ENCODE measurements at regions of chr10 and their contacts with region 1.

Region 1: DNA sequence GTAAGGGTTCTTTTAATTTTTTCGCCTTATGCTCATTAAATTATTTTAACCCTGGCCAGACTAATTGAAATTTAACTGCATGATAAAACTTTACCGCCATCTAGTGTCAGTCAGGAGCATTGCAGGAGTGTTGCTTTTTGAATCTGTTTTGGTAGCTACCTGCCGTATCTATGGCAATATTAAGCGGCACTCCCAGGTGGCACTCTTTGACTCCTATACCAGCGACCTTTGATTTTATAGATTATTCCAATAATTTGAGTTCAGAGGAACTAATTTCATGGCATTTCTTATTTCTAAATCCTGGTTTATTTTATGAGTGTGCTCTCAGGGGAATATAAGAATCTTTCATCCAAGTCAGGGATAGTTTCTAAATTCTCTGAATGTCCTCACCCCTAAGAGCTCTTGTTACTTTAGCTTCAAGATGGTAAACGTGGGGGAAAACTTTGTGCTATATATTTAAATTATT is 198.9 kb downstream of the REEP3 start:
- DNase-seq: peak; percentile 25
- ATAC-seq: peak; percentile 81
- H3K4me3 ChIP-seq: no peak overlapping the region
- H3K27ac ChIP-seq: no peak overlapping the region
- H3K4me1 ChIP-seq: no peaks in the 10 kb centered on the region
- H3K27me3 ChIP-seq: no peaks in the 10 kb centered on the region; a peak in 2 of 4 replicates
- CTCF ChIP-seq: peak; percentile 81 to 95 (median 92); a peak in 5 of 6 replicates
- EP300 ChIP-seq: no peak
- POLR2A ChIP-seq: no peak
- RAD21 ChIP-seq: peak; percentile 94

Region 2: DNA sequence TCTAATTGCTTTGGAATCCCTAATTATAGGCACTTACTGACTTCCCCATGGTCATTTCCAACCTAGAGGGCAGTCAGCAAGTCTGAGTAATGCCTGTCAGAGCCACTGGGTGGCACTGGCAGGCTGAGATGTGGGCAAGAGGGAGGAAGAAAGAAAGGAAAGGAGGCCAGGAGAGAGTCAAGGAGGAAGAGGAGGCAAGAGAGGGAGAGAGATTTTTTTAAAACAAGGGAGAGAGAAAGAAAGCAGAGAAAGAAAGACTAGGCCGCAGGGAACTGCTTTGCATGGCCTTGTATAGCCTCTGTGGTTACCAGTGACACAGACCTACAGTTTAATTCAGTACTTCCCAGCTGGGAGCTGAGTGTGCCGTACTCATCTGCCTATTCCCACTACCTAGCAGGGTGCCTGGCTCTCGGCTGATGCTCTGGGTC is 1126.0 kb before region 1 on chr10:
- CTCF ChIA-PET with region 1: interaction called, 7 read pairs
- POLR2A ChIA-PET with region 1: no interaction called
- RAD21 ChIA-PET with region 1: interaction called, 3 read pairs
- SMC1A ChIA-PET with region 1: interaction called, 4 read pairs
- in situ Hi-C with region 1: loop called (anchors 25 kb)
- intact Hi-C with region 1: loop called (anchors 10 kb)
- DNase-seq: peak; percentile 30
- ATAC-seq: peak; percentile 94
- H3K4me3 ChIP-seq: no peak overlapping the region
- H3K27ac ChIP-seq: no peak overlapping the region
- H3K4me1 ChIP-seq: peaks cover 7% of the 10 kb centered on the region
- H3K27me3 ChIP-seq: no peaks in the 10 kb centered on the region
- CTCF ChIP-seq: peak; percentile 90 to 97 (median 95)
- EP300 ChIP-seq: no peak
- POLR2A ChIP-seq: no peak
- RAD21 ChIP-seq: peak; percentile 100

Region 3: GRCh38 chr10:63157845-63158624 is 562.1 kb before region 1 on chr10:
- CTCF ChIA-PET with region 1: interaction called, 521 read pairs
- POLR2A ChIA-PET with region 1: no interaction called
- RAD21 ChIA-PET with region 1: interaction called, 30 read pairs
- SMC1A ChIA-PET with region 1: interaction called, 103 read pairs
- in situ Hi-C with region 1: loop called (anchors 5 kb)
- intact Hi-C with region 1: no loop called
- DNase-seq: peak; percentile 49
- ATAC-seq: peak; percentile 89
- H3K4me3 ChIP-seq: no peak overlapping the region
- H3K27ac ChIP-seq: 0 out of 2 replicates have a peak overlapping the region, but pooled peaks have one; percentile 31
- H3K4me1 ChIP-seq: peaks cover 3% of the 10 kb centered on the region; the same call in 1 of the 2 replicates
- H3K27me3 ChIP-seq: no peaks in the 10 kb centered on the region
- CTCF ChIP-seq: peak; percentile 70 to 86 (median 74); a peak in 5 of 6 replicates
- EP300 ChIP-seq: no peak
- POLR2A ChIP-seq: no peak
- RAD21 ChIP-seq: peak; percentile 97

Region 4: DNA sequence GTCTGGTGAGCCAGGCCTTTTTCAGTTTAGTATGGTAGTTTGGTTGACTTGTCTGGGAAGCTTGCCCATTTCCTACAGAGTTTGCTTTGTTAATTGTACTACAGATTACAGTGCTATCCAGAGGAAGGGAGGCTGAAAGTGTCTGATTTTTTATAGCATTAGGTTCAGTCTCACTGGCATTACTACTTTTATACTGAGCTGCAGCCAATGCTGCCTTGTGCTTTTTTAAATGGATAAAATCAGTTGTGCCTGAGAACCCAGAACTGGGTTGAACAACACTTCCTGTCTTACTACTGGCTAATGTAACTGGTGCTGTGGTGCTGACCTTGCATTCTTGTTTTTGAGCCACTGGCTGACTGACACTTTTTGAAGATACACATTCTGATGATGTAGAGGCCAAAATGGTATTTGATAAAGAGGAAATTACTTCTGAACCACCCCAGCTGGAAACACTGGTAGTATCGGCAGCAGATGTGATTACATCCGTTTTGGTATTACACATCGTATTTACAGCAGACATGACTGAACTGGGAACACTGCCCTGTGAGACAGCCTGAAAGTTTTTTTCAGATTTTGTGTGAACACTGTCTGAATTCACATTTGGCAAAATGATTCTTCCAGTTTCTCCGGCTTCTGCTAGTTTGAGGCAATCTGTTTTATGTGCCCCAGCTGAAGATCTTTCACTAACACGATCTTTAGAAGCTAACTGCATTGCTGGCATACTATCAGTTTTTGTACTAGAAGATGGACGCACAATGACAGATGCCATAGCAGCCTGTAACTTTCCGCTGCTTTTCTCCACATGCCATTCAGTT is 512.9 kb before region 1 on chr10:
- CTCF ChIA-PET with region 1: interaction called, 13 read pairs
- POLR2A ChIA-PET with region 1: no interaction called
- RAD21 ChIA-PET with region 1: interaction called, 10 read pairs
- SMC1A ChIA-PET with region 1: interaction called, 9 read pairs
- in situ Hi-C with region 1: no loop called
- intact Hi-C with region 1: no loop called
- DNase-seq: peak; percentile 36
- ATAC-seq: peak; percentile 51
- H3K4me3 ChIP-seq: no peak overlapping the region; the same call in 1 of the 2 replicates
- H3K27ac ChIP-seq: peak overlapping the region; percentile 75
- H3K4me1 ChIP-seq: peaks cover 32% of the 10 kb centered on the region
- H3K27me3 ChIP-seq: no peaks in the 10 kb centered on the region
- CTCF ChIP-seq: no peak
- EP300 ChIP-seq: no peak
- POLR2A ChIP-seq: no peak; the same call in 1 of the 2 replicates
- RAD21 ChIP-seq: no peak

Region 5: GRCh38 chr10:63528084-63528747 is 191.9 kb before region 1 on chr10:
- CTCF ChIA-PET with region 1: interaction called, 7 read pairs
- POLR2A ChIA-PET with region 1: no interaction called
- RAD21 ChIA-PET with region 1: no interaction called
- SMC1A ChIA-PET with region 1: interaction called, 12 read pairs
- in situ Hi-C with region 1: no loop called
- intact Hi-C with region 1: loop called (anchors 10 kb)
- DNase-seq: no peak
- ATAC-seq: no peak
- H3K4me3 ChIP-seq: no peak overlapping the region
- H3K27ac ChIP-seq: no peak overlapping the region
- H3K4me1 ChIP-seq: no peaks in the 10 kb centered on the region; the same call in 1 of the 2 replicates
- H3K27me3 ChIP-seq: no peaks in the 10 kb centered on the region
- CTCF ChIP-seq: no peak
- EP300 ChIP-seq: no peak
- POLR2A ChIP-seq: no peak
- RAD21 ChIP-seq: no peak

Region 6: DNA sequence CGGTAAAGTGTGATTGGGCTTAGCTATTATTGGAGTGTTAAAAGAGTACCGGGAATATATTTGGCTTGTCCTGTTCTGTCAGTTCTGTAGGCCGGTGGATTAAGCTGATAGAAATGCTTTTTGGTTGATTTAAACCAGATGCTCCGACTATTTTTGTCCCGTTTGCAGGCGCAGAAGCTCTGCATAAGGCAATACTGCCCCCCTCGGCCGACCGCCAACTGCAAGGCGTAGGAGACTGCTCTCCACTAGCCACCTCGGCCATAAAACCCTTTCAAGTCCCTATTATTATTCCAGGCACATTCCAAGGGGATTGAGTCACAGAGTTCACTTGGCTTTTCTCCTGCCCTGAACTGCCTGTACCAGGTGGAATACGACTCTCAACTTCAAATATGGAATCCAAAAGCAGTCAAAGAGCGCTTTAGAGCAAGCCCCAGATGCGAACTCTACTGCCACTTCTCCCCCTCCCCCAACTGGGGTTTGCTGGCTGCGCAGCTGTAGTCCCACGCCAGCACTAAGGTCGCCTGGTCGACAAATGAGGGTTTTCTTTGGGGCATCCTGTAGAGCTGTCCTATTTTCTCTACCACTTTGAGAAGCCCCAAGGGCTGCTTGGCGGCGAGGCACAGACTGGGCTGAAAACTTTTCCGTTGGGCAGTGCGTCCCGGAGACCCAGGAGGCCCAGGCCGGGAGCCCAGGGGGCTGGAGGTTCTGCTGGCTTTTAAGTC is 90.6 kb before region 1 on chr10:
- CTCF ChIA-PET with region 1: interaction called, 149 read pairs
- POLR2A ChIA-PET with region 1: no interaction called
- RAD21 ChIA-PET with region 1: interaction called, 96 read pairs
- SMC1A ChIA-PET with region 1: interaction called, 50 read pairs
- in situ Hi-C with region 1: no loop called
- intact Hi-C with region 1: loop called (anchors 1 kb)
- DNase-seq: peak; percentile 83
- ATAC-seq: peak; percentile 79
- H3K4me3 ChIP-seq: peak overlapping the region; percentile 87
- H3K27ac ChIP-seq: peak overlapping the region; percentile 89
- H3K4me1 ChIP-seq: peaks cover 9% of the 10 kb centered on the region; the same call in 1 of the 2 replicates
- H3K27me3 ChIP-seq: no peaks in the 10 kb centered on the region
- CTCF ChIP-seq: peak; percentile 84 to 94 (median 92)
- EP300 ChIP-seq: 0 out of 4 replicates have a peak, but pooled peaks of 1 of the 2 experiments have one; percentile 25
- POLR2A ChIP-seq: no peak
- RAD21 ChIP-seq: peak; percentile 87

Region 7: DNA sequence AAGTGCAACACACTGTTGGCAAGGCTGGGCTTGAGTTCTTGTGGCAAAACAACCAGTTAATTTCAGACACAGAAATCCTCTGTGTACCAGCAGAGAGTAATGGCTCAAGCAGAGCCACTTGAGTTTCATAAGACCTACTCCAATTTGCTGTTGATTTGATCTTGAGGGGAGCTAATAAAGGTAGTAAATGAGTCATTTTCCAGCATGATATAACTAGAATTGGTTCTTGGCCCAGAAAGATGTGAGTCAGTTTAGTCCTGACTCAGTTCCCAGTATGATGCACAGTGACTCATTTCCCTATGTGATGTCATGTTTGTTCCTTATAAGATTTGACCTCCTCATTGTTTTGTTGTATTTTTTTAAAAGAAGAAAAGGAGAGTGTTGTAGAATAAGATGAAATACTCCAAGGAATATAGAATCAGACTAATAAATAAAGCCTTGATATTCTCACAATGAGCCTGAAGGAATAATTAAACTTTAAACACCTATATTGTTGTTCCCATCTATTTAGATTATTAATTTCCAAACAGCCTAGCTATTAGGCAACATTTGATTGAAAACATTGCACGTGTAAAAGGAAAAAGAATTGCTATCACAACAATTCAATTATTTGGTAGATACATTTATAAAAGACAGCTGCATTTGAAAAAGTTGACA is 12.7 kb before region 1 on chr10:
- CTCF ChIA-PET with region 1: interaction called, 62 read pairs
- POLR2A ChIA-PET with region 1: interaction called, 5 read pairs
- RAD21 ChIA-PET with region 1: interaction called, 12 read pairs
- SMC1A ChIA-PET with region 1: interaction called, 17 read pairs
- in situ Hi-C with region 1: no loop called
- intact Hi-C with region 1: no loop called
- DNase-seq: peak; percentile 48
- ATAC-seq: peak; percentile 91
- H3K4me3 ChIP-seq: no peak overlapping the region
- H3K27ac ChIP-seq: no peak overlapping the region
- H3K4me1 ChIP-seq: peaks cover 17% of the 10 kb centered on the region
- H3K27me3 ChIP-seq: no peaks in the 10 kb centered on the region
- CTCF ChIP-seq: no peak
- EP300 ChIP-seq: peak; percentile 76 to 90; a peak in 3 of 4 replicates
- POLR2A ChIP-seq: no peak
- RAD21 ChIP-seq: no peak